ENCODE measurements at regions of chr11 and their contacts with region 1.

Region 1: DNA sequence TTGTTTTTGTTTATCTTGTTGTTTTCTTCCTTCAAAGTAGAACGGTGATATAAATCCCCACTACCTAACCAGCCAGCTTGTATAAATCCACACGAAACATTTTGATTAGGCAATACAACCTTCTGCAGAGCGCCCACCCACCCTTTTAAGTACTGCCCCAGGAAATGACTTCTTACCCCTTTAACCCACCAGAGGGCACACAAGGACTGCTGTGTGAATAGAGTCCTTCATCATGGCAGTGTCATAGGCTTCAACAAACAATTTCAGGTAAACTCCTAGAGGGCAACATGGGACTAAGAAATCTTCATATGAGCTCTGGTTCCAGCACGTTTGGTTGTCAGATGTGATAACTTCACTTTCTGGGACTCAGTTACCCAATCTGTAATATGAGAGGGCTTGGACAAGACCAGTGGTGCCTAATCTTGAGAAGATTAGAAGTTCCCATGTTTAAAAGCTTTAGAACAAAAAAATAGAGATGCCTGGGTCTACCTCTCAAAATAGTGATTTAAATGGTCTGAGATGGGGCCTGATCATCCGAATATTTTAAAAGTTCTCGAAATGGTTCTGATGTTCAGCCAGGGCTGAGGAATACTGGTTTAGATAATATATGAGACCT is 56.1 kb downstream of the PIWIL4 start:
- DNase-seq: peak; percentile 78
- ATAC-seq: peak; percentile 98
- H3K4me3 ChIP-seq: no peak overlapping the region
- H3K27ac ChIP-seq: no peak overlapping the region
- H3K4me1 ChIP-seq: no peaks in the 10 kb centered on the region
- H3K27me3 ChIP-seq: no peaks in the 10 kb centered on the region; the same call in 1 of the 2 replicates
- CTCF ChIP-seq: peak; percentile 83
- POLR2A ChIP-seq: peak; percentile 54
- RAD21 ChIP-seq: peak; percentile 97

Region 2: GRCh38 chr11:94786264-94787126 is 163.3 kb after region 1 on chr11:
- CTCF ChIA-PET with region 1: no interaction called
- POLR2A ChIA-PET with region 1: no interaction called
- dilution Hi-C with region 1: no loop called
- in situ Hi-C with region 1: no loop called
- intact Hi-C with region 1: loop called (anchors 1 kb)
- DNase-seq: peak; percentile 59
- ATAC-seq: peak; percentile 55
- H3K4me3 ChIP-seq: no peak overlapping the region
- H3K27ac ChIP-seq: no peak overlapping the region
- H3K4me1 ChIP-seq: peaks cover 29% of the 10 kb centered on the region
- H3K27me3 ChIP-seq: no peaks in the 10 kb centered on the region
- CTCF ChIP-seq: peak; percentile 53
- POLR2A ChIP-seq: no peak
- RAD21 ChIP-seq: peak; percentile 47

Region 3: DNA sequence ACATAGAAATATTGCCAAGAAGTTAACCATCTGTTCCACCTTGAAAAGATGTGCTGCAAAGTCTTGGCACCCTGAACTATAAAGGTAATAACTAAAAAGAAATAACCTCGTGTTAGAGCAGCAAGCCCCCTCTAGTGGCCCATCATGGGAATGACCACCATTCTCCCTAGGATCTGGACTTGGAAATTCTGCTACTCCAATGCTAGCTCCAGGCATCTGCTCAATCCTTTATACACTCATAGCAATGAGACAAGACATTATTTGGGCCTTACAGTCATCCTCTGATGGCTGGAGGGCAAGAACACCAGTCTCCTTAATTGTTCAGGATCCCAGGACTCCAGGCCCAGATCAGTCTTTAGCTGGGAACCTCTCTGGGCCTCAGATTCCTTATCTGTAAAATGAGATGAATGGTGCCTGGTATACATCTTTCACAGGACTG is 274.1 kb after region 1 on chr11:
- CTCF ChIA-PET with region 1: interaction called, 14 read pairs
- POLR2A ChIA-PET with region 1: no interaction called
- dilution Hi-C with region 1: no loop called
- in situ Hi-C with region 1: no loop called
- intact Hi-C with region 1: loop called (anchors 1 kb)
- DNase-seq: peak; percentile 45
- ATAC-seq: peak; percentile 83
- H3K4me3 ChIP-seq: no peak overlapping the region
- H3K27ac ChIP-seq: no peak overlapping the region
- H3K4me1 ChIP-seq: peaks cover 4% of the 10 kb centered on the region; the same call in 1 of the 2 replicates
- H3K27me3 ChIP-seq: no peaks in the 10 kb centered on the region
- CTCF ChIP-seq: peak; percentile 77
- POLR2A ChIP-seq: no peak
- RAD21 ChIP-seq: peak; percentile 77

Region 4: GRCh38 chr11:94973099-94973968 is 350.1 kb after region 1 on chr11 and contains the starts of genes CWC15 and KDM4D:
- CTCF ChIA-PET with region 1: interaction called, 8 read pairs
- POLR2A ChIA-PET with region 1: no interaction called
- dilution Hi-C with region 1: no loop called
- in situ Hi-C with region 1: loop called (anchors 5 kb)
- intact Hi-C with region 1: loop called (anchors 1 kb)
- DNase-seq: peak; percentile 90
- ATAC-seq: peak; percentile 100
- H3K4me3 ChIP-seq: peak within 1 kb of the TSS; percentile 95
- H3K27ac ChIP-seq: peak within 1 kb of the TSS; percentile 95
- H3K4me1 ChIP-seq: no peaks in the 10 kb centered on the region
- H3K27me3 ChIP-seq: no peaks in the 10 kb centered on the region
- CTCF ChIP-seq: no peak
- POLR2A ChIP-seq: peak; percentile 78
- RAD21 ChIP-seq: no peak; the same call in 1 of the 2 replicates
- total RNA-seq, gene CWC15: 48.6 and 70.0 TPM in 2 replicates
- total RNA-seq, gene KDM4D: 0.90 and 1.1 TPM in 2 replicates

Region 5: GRCh38 chr11:95150946-95151684 is 527.9 kb after region 1 on chr11:
- CTCF ChIA-PET with region 1: no interaction called
- POLR2A ChIA-PET with region 1: no interaction called
- dilution Hi-C with region 1: no loop called
- in situ Hi-C with region 1: no loop called
- intact Hi-C with region 1: loop called (anchors 5 kb)
- DNase-seq: peak; percentile 78
- ATAC-seq: peak; percentile 91
- H3K4me3 ChIP-seq: peak overlapping the region; percentile 35
- H3K27ac ChIP-seq: no peak overlapping the region
- H3K4me1 ChIP-seq: peaks cover 7% of the 10 kb centered on the region; the same call in 1 of the 2 replicates
- H3K27me3 ChIP-seq: 0 out of 2 replicates have a peak, but pooled peaks cover 2% of the 10 kb centered on the region
- CTCF ChIP-seq: peak; percentile 89
- POLR2A ChIP-seq: no peak
- RAD21 ChIP-seq: no peak

Region 6: DNA sequence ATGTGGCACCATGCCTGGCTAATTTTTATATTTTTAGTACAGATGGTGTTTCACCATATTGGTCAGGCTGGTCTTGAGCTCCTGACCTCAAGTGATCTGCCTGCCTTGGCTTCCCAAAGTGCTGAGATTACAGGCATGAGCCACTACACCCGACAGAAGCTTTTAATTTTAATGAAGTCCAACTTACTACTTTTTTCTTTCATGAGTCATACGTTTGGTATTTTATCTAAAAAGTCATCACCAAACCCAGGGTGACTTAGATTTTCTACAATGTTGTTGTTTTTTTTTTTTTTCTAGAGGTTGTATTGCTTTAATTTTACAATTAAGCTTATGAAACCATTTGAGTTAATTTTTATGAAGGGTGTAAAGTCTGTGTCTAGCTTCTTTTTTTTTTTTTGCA is 1801.5 kb after region 1 on chr11:
- CTCF ChIA-PET with region 1: no interaction called
- POLR2A ChIA-PET with region 1: no interaction called
- dilution Hi-C with region 1: no loop called
- in situ Hi-C with region 1: loop called (anchors 25 kb)
- intact Hi-C with region 1: loop called (anchors 5 kb)
- DNase-seq: peak; percentile 44
- ATAC-seq: no peak; the same call in 1 of the 2 replicates
- H3K4me3 ChIP-seq: no peak overlapping the region
- H3K27ac ChIP-seq: no peak overlapping the region
- H3K4me1 ChIP-seq: no peaks in the 10 kb centered on the region
- H3K27me3 ChIP-seq: no peaks in the 10 kb centered on the region
- CTCF ChIP-seq: no peak
- POLR2A ChIP-seq: no peak
- RAD21 ChIP-seq: no peak